ENCODE measurements at regions of chr19 and their contacts with region 1.

Region 1: GRCh38 chr19:33176670-33177416 is 17.3 kb upstream of the LRP3 start:
- DNase-seq: peak; percentile 91 to 100 (median 97)
- ATAC-seq: peak; percentile 74
- H3K4me3 ChIP-seq: peak overlapping the region; percentile 78 to 89
- H3K4me3 Mint-ChIP-seq: peak overlapping the region; percentile 95
- H3K27ac ChIP-seq: peak overlapping the region; percentile 83
- H3K27ac Mint-ChIP-seq: peak overlapping the region; percentile 98
- H3K4me1 ChIP-seq: peaks cover 16% of the 10 kb centered on the region
- H3K4me1 Mint-ChIP-seq: peaks cover 37% of the 10 kb centered on the region
- H3K27me3 ChIP-seq: no peaks in the 10 kb centered on the region
- H3K27me3 Mint-ChIP-seq: no peaks in the 10 kb centered on the region
- CTCF ChIP-seq: no peak

Region 2: DNA sequence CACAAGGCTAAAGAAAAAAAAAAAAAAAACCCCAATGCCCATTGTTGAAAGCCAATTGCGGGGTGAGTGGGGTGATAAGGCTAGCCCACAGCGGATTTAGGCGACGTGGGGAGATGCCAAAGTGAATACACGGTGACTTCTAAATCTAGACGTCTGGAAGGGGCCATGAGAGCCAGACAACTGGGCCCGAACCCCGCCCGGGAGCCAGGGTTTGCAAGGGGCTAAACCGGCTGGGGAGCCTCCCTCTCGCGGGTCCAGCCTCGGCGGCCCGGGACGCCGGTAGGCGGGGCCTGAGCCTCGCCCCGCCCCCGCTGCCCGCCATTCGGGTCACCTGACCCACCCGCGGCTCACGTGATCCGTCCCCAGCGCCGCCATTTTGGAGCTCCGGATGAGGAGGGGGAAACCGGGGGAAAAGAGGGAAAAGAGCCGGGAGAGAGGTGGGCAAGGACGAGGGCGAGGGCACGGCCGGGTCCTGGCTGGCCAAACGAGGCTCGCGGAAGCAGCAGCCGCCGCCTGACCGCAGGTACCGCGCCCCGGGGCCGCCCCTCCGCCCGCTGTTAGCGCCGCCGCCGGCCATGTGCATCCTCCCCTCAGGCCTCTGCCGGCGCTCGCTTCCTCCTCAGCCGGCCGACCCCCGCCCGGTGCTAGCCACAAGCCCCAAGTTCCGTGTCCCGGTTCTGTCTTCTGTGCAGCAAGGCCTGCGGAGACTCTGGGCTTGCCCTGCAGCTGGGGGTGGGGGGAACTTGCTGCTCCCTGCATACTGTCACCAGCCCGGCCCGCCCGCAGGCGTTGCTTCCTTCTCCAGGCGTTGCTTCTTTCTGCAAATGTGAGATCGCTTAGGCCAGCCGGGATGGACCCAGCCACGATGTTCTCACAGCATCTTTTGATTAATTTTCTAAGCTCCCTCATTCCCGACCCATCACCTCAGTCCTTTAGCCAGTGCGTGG is 831.3 kb before region 1 on chr19 and contains the start of gene ZNF507:
- CTCF ChIA-PET with region 1: no interaction called
- POLR2A ChIA-PET with region 1: no interaction called
- intact Hi-C with region 1: loop called in 1 of 2 experiments (anchors 2 kb)
- DNase-seq: peak; percentile 58 to 88 (median 80)
- ATAC-seq: peak; percentile 78
- H3K4me3 ChIP-seq: peak within 1 kb of the TSS; percentile 69 to 91
- H3K4me3 Mint-ChIP-seq: peak within 1 kb of the TSS; percentile 95
- H3K27ac ChIP-seq: peak within 1 kb of the TSS; percentile 68 to 75
- H3K27ac Mint-ChIP-seq: peak within 1 kb of the TSS; percentile 97
- H3K4me1 ChIP-seq: peaks cover 39% of the 10 kb centered on the region
- H3K4me1 Mint-ChIP-seq: peaks cover 42% of the 10 kb centered on the region
- H3K27me3 ChIP-seq: no peaks in the 10 kb centered on the region
- H3K27me3 Mint-ChIP-seq: no peaks in the 10 kb centered on the region
- CTCF ChIP-seq: no peak
- total RNA-seq, gene ZNF507: 28.4 to 29.6 TPM

Region 3: GRCh38 chr19:32674959-32675719 is 501.7 kb before region 1 on chr19 and contains the start of gene ANKRD27:
- CTCF ChIA-PET with region 1: no interaction called
- POLR2A ChIA-PET with region 1: no interaction called
- intact Hi-C with region 1: loop called (anchors 5 kb)
- DNase-seq: peak; percentile 95 to 99 (median 98)
- ATAC-seq: peak; percentile 94
- H3K4me3 ChIP-seq: peak within 1 kb of the TSS; percentile 93 to 99
- H3K4me3 Mint-ChIP-seq: peak within 1 kb of the TSS; percentile 94
- H3K27ac ChIP-seq: peak within 1 kb of the TSS; percentile 70 to 82
- H3K27ac Mint-ChIP-seq: peak within 1 kb of the TSS; percentile 80
- H3K4me1 ChIP-seq: peaks cover 32% of the 10 kb centered on the region
- H3K4me1 Mint-ChIP-seq: peaks cover 44% of the 10 kb centered on the region
- H3K27me3 ChIP-seq: peaks cover 0 to 6% of the 10 kb centered on the region in 2 experiments
- H3K27me3 Mint-ChIP-seq: peaks cover 11% of the 10 kb centered on the region
- CTCF ChIP-seq: no peak
- total RNA-seq, gene ANKRD27: 15.2 to 16.0 TPM

Region 4: GRCh38 chr19:33080761-33081681 is 95.8 kb before region 1 on chr19 and contains the start of gene GPATCH1:
- CTCF ChIA-PET with region 1: no interaction called
- POLR2A ChIA-PET with region 1: no interaction called
- intact Hi-C with region 1: loop called (anchors 1 kb)
- DNase-seq: peak; percentile 66 to 89 (median 81)
- ATAC-seq: peak; percentile 96
- H3K4me3 ChIP-seq: peak within 1 kb of the TSS; percentile 76 to 79
- H3K4me3 Mint-ChIP-seq: peak within 1 kb of the TSS; percentile 96
- H3K27ac ChIP-seq: peak within 1 kb of the TSS; percentile 62 to 80
- H3K27ac Mint-ChIP-seq: peak within 1 kb of the TSS; percentile 97
- H3K4me1 ChIP-seq: peaks cover 9% of the 10 kb centered on the region
- H3K4me1 Mint-ChIP-seq: peaks cover 30% of the 10 kb centered on the region
- H3K27me3 ChIP-seq: no peaks in the 10 kb centered on the region
- H3K27me3 Mint-ChIP-seq: no peaks in the 10 kb centered on the region
- CTCF ChIP-seq: no peak
- total RNA-seq, gene GPATCH1: 4.9 to 5.2 TPM

Region 5: GRCh38 chr19:33156334-33156733 is 20.5 kb before region 1 on chr19:
- CTCF ChIA-PET with region 1: interaction called, 45 read pairs
- POLR2A ChIA-PET with region 1: interaction called, 45 read pairs
- intact Hi-C with region 1: loop called (anchors 1 kb)
- DNase-seq: no peak
- ATAC-seq: no peak
- H3K4me3 ChIP-seq: no peak overlapping the region
- H3K4me3 Mint-ChIP-seq: no peak overlapping the region
- H3K27ac ChIP-seq: no peak overlapping the region
- H3K27ac Mint-ChIP-seq: no peak overlapping the region
- H3K4me1 ChIP-seq: peaks cover 32% of the 10 kb centered on the region
- H3K4me1 Mint-ChIP-seq: peaks cover 31% of the 10 kb centered on the region
- H3K27me3 ChIP-seq: no peaks in the 10 kb centered on the region
- H3K27me3 Mint-ChIP-seq: no peaks in the 10 kb centered on the region
- CTCF ChIP-seq: no peak

Region 6: GRCh38 chr19:33521480-33522370 is 344.9 kb after region 1 on chr19 and contains the start of gene PEPD:
- CTCF ChIA-PET with region 1: no interaction called
- POLR2A ChIA-PET with region 1: no interaction called
- intact Hi-C with region 1: loop called in 1 of 2 experiments (anchors 2 kb)
- DNase-seq: peak; percentile 59 to 90 (median 78)
- ATAC-seq: peak; percentile 97
- H3K4me3 ChIP-seq: peak within 1 kb of the TSS; percentile 63 to 81
- H3K4me3 Mint-ChIP-seq: peak within 1 kb of the TSS; percentile 89
- H3K27ac ChIP-seq: peak within 1 kb of the TSS; percentile 39 to 48
- H3K27ac Mint-ChIP-seq: peak within 1 kb of the TSS; percentile 85
- H3K4me1 ChIP-seq: peaks cover 18% of the 10 kb centered on the region
- H3K4me1 Mint-ChIP-seq: peaks cover 26% of the 10 kb centered on the region
- H3K27me3 ChIP-seq: no peaks in the 10 kb centered on the region
- H3K27me3 Mint-ChIP-seq: no peaks in the 10 kb centered on the region
- CTCF ChIP-seq: no peak
- total RNA-seq, gene PEPD: 14.1 to 14.4 TPM